Activated T-helper 1 cell treated with anti-CD3 and anti-CD28 coated beads, Interleukin-12 subunit alpha, Interleukin-12 subunit beta, Interleukin-2, Interleukin-4 antibody, amounts not matched to agents 30 ng/mL and 10 ng/mL and 1 ng/mL, durations not matched to agents 14 hours and 24 hours and 36 hours (primary cell): ENCODE measurements at regions of chr4 and their contacts with region 1.

Region 1: DNA sequence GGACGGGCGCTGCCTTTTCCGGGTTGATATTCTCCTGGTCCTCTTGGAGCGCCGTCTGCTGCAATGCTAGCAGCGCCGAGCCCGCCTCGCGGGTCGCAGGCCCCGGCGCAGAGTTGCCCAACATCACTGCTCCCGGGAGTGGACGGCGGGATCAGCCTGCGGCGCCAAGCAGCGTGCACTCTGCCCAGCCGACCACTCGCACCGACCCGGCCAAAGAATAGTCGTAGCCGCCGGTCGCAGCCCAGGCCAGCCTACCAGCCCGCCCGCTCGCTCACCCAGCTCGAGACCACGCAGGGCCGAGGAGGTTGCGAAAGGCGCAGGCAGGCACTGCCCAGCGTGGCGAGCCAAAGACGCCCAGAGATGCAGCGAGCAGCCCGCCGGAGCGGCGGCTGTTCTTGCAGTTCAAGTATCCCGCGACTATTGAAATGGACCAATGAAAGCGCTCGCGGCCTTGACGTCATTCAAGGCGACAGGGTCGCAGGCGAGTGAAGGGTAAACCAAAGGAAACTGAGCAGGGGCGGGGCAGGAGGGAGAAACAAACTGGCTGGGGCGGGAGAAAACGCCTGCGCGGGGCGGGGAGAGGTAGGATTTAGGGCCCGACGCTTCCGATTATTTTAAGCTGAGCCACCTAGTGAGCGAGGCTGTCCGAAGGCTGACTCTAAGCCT is at the start of gene CCNA2:
- DNase-seq: peak; percentile 95
- H3K4me3 Mint-ChIP-seq: peak within 1 kb of the TSS; percentile 94
- H3K27ac Mint-ChIP-seq: peak within 1 kb of the TSS; percentile 91
- H3K4me1 Mint-ChIP-seq: peaks cover 45% of the 10 kb centered on the region
- H3K27me3 Mint-ChIP-seq: no peaks in the 10 kb centered on the region
- total RNA-seq, gene CCNA2: 59.9 and 64.3 TPM in 2 replicates

Region 2: GRCh38 chr4:121811122-121811521 is 12.5 kb before region 1 on chr4:
- intact Hi-C with region 1: loop called (anchors 1 kb)
- DNase-seq: no peak
- H3K4me3 Mint-ChIP-seq: no peak overlapping the region
- H3K27ac Mint-ChIP-seq: no peak overlapping the region
- H3K4me1 Mint-ChIP-seq: peaks cover 25% of the 10 kb centered on the region
- H3K27me3 Mint-ChIP-seq: no peaks in the 10 kb centered on the region

Region 3: GRCh38 chr4:121869841-121870656 is 46.4 kb after region 1 on chr4 and contains the start of gene BBS7:
- intact Hi-C with region 1: loop called (anchors 1 kb)
- DNase-seq: peak; percentile 94
- H3K4me3 Mint-ChIP-seq: peak within 1 kb of the TSS; percentile 99
- H3K27ac Mint-ChIP-seq: peak within 1 kb of the TSS; percentile 91
- H3K4me1 Mint-ChIP-seq: peaks cover 23% of the 10 kb centered on the region
- H3K27me3 Mint-ChIP-seq: peaks cover 22% of the 10 kb centered on the region
- total RNA-seq, gene BBS7: 16.9 and 20.2 TPM in 2 replicates